PC-3 (cell line): ENCODE measurements at regions of chr12 and their contacts with region 1.

Region 1: DNA sequence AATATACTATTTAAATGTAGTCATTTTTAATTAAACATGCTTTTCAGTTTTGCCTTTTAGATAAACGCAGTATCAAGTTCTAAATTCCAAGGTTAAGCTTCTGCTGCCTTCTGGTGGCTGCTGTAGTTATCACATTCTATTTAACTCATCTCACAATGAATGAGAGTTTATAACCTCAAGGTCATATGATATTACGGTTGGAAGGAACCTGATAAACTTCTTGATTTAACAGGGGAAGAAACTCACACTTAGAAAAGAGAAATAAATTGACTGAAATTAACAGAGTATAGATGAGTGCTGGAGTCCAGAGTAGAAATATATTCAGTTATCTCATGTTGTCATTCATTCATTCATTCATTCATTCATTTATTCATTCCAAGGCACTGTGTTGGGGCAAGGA is 31.9 kb downstream of the GUCY2C start:
- DNase-seq: peak; percentile 66
- ATAC-seq: 0 out of 2 replicates have a peak, but pooled peaks have one; percentile 35
- H3K4me3 ChIP-seq: no peak overlapping the region
- H3K27ac ChIP-seq: no peak overlapping the region
- H3K4me1 ChIP-seq: no peaks in the 10 kb centered on the region
- H3K27me3 ChIP-seq: peaks cover 4% of the 10 kb centered on the region; the same call in 1 of the 2 replicates
- CTCF ChIP-seq: peak; percentile 60; the same call in 1 of the 2 replicates

Region 2: GRCh38 chr12:14185427-14186192 is 478.9 kb before region 1 on chr12:
- CTCF ChIA-PET with region 1: no interaction called
- POLR2A ChIA-PET with region 1: no interaction called
- intact Hi-C with region 1: loop called (anchors 1 kb)
- DNase-seq: peak; percentile 63
- ATAC-seq: peak; percentile 76
- H3K4me3 ChIP-seq: no peak overlapping the region
- H3K27ac ChIP-seq: no peak overlapping the region
- H3K4me1 ChIP-seq: no peaks in the 10 kb centered on the region
- H3K27me3 ChIP-seq: no peaks in the 10 kb centered on the region
- CTCF ChIP-seq: peak; percentile 74